Caco-2 (cell line): ENCODE measurements at regions of chr2 and their contacts with region 1.

Region 1: DNA sequence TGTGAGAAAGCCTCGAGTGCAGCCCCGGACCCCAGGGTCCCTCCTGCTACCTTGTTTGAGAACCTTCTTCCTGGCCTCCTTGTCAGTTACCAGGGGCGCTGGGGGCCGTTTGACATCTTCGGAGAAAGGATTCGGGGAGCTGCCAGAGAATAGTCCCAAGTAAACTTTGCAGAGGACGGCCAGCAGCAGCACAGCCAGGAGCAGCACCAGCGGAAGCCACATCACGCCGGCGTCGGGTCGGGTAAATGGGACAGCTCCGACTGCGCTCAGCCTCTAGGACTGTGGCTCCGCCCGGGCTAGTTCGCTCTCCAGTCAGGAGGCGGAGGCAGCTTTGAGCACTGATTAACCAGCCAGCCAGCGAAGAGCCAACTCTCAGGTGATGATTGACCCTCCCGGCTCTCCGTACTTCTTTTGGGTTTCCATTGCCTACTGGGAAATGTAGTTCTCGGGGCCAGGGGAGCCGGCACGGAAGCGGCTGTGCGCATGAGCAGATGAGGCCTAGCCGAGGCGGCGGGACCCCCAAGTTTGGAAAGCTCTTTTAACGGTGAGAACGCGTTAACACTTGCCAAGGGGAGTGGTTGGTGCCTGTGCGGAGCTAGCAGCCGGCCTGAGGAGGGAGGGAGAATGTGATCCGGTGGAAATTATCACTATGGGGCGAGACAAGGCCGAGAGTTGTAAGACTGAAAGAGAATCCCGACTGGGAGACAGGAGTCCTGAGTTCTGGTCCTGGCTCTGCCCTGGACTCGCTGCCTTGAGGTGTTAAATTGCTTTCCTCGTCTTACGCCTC is at the starts of genes ELMOD3 and RETSAT:
- DNase-seq: peak; percentile 99 to 100
- H3K4me3 ChIP-seq: peak within 1 kb of the TSS; percentile 49
- H3K4me3 Mint-ChIP-seq: peak within 1 kb of the TSS; percentile 99
- H3K27ac Mint-ChIP-seq: peak within 1 kb of the TSS; percentile 96
- H3K4me1 ChIP-seq: no peaks in the 10 kb centered on the region
- H3K4me1 Mint-ChIP-seq: no peaks in the 10 kb centered on the region
- H3K27me3 ChIP-seq: no peaks in the 10 kb centered on the region
- H3K27me3 Mint-ChIP-seq: no peaks in the 10 kb centered on the region
- CTCF ChIP-seq: no peak
- total RNA-seq, gene ELMOD3: 10.3 and 11.3 TPM in 2 replicates
- total RNA-seq, gene RETSAT: 31.1 and 32.3 TPM in 2 replicates

Region 2: GRCh38 chr2:85162746-85163301 is 191.7 kb before region 1 on chr2:
- CTCF ChIA-PET with region 1: no interaction called
- POLR2A ChIA-PET with region 1: no interaction called
- intact Hi-C with region 1: no loop called
- DNase-seq: no peak
- H3K4me3 ChIP-seq: no peak overlapping the region
- H3K4me3 Mint-ChIP-seq: no peak overlapping the region
- H3K27ac Mint-ChIP-seq: no peak overlapping the region
- H3K4me1 ChIP-seq: no peaks in the 10 kb centered on the region
- H3K4me1 Mint-ChIP-seq: peaks cover 18% of the 10 kb centered on the region
- H3K27me3 ChIP-seq: no peaks in the 10 kb centered on the region
- H3K27me3 Mint-ChIP-seq: no peaks in the 10 kb centered on the region
- CTCF ChIP-seq: no peak

Region 3: GRCh38 chr2:85302121-85302520 is 52.4 kb before region 1 on chr2:
- CTCF ChIA-PET with region 1: no interaction called
- POLR2A ChIA-PET with region 1: no interaction called
- intact Hi-C with region 1: no loop called
- DNase-seq: no peak
- H3K4me3 ChIP-seq: no peak overlapping the region
- H3K4me3 Mint-ChIP-seq: no peak overlapping the region
- H3K27ac Mint-ChIP-seq: no peak overlapping the region
- H3K4me1 ChIP-seq: peaks cover 6% of the 10 kb centered on the region
- H3K4me1 Mint-ChIP-seq: peaks cover 9% of the 10 kb centered on the region
- H3K27me3 ChIP-seq: no peaks in the 10 kb centered on the region
- H3K27me3 Mint-ChIP-seq: no peaks in the 10 kb centered on the region
- CTCF ChIP-seq: no peak

Region 4: DNA sequence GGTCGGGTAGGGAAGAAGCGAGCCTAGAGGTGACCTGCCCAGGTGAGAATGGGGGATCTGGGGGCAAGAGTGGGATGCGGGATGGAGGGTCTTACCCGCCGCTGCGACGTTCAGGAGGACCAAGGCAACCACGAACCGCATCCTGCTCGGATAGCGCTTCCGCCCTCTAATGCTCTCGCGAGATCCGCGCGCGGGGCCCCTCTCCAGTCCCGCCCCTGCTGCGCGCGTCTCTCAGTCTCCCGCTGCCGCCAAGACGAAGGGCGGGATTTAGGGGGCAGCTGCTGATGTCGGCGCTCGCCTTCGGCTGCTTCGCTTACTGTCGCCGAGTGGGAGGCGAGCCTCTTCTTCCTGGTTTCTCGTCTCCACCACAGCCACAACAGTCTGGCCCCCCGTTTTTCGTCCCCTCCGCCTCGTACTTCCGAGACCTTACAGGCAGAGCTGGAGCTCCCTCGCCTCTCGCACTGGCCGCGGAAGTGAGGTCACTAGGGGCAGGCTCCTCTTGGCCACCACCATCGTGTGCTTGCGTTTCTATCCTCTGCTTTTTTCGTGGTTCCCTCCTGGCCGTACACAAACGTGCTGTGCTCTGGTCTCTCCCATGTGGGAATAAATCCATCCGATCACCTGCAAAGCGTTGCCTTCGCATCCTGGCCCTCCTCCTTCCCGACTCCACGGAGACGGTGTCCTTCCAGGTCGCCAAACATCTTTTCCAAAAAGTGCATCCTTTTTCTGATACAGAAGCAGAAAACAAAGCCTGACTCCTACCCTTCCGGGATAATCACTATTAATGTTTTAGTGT is 26.5 kb before region 1 on chr2 and contains the start of gene TGOLN2:
- CTCF ChIA-PET with region 1: interaction called, 4 read pairs
- POLR2A ChIA-PET with region 1: interaction called, 18 read pairs
- intact Hi-C with region 1: loop called (anchors 1 kb)
- DNase-seq: peak; percentile 91 to 94
- H3K4me3 ChIP-seq: peak within 1 kb of the TSS; percentile 93
- H3K4me3 Mint-ChIP-seq: peak within 1 kb of the TSS; percentile 86
- H3K27ac Mint-ChIP-seq: peak within 1 kb of the TSS; percentile 97
- H3K4me1 ChIP-seq: peaks cover 25% of the 10 kb centered on the region
- H3K4me1 Mint-ChIP-seq: peaks cover 22% of the 10 kb centered on the region
- H3K27me3 ChIP-seq: no peaks in the 10 kb centered on the region
- H3K27me3 Mint-ChIP-seq: no peaks in the 10 kb centered on the region
- CTCF ChIP-seq: peak in 1 of 2 experiments; percentile 14
- total RNA-seq, gene TGOLN2: 109 and 119 TPM in 2 replicates

Region 5: GRCh38 chr2:85369500-85369899 is 15.0 kb after region 1 on chr2:
- CTCF ChIA-PET with region 1: interaction called, 13 read pairs
- POLR2A ChIA-PET with region 1: interaction called, 4 read pairs
- intact Hi-C with region 1: no loop called
- DNase-seq: peak in 1 of 2 experiments; percentile 25
- H3K4me3 ChIP-seq: no peak overlapping the region
- H3K4me3 Mint-ChIP-seq: no peak overlapping the region
- H3K27ac Mint-ChIP-seq: no peak overlapping the region
- H3K4me1 ChIP-seq: no peaks in the 10 kb centered on the region
- H3K4me1 Mint-ChIP-seq: no peaks in the 10 kb centered on the region
- H3K27me3 ChIP-seq: no peaks in the 10 kb centered on the region
- H3K27me3 Mint-ChIP-seq: no peaks in the 10 kb centered on the region
- CTCF ChIP-seq: no peak

Region 6: GRCh38 chr2:85468704-85469349 is 114.3 kb after region 1 on chr2:
- CTCF ChIA-PET with region 1: no interaction called
- POLR2A ChIA-PET with region 1: no interaction called
- intact Hi-C with region 1: no loop called
- DNase-seq: peak; percentile 70 to 86
- H3K4me3 ChIP-seq: no peak overlapping the region
- H3K4me3 Mint-ChIP-seq: peak overlapping the region; percentile 20
- H3K27ac Mint-ChIP-seq: peak overlapping the region; percentile 82
- H3K4me1 ChIP-seq: peaks cover 18% of the 10 kb centered on the region
- H3K4me1 Mint-ChIP-seq: peaks cover 23% of the 10 kb centered on the region
- H3K27me3 ChIP-seq: no peaks in the 10 kb centered on the region
- H3K27me3 Mint-ChIP-seq: no peaks in the 10 kb centered on the region
- CTCF ChIP-seq: no peak

Region 7: DNA sequence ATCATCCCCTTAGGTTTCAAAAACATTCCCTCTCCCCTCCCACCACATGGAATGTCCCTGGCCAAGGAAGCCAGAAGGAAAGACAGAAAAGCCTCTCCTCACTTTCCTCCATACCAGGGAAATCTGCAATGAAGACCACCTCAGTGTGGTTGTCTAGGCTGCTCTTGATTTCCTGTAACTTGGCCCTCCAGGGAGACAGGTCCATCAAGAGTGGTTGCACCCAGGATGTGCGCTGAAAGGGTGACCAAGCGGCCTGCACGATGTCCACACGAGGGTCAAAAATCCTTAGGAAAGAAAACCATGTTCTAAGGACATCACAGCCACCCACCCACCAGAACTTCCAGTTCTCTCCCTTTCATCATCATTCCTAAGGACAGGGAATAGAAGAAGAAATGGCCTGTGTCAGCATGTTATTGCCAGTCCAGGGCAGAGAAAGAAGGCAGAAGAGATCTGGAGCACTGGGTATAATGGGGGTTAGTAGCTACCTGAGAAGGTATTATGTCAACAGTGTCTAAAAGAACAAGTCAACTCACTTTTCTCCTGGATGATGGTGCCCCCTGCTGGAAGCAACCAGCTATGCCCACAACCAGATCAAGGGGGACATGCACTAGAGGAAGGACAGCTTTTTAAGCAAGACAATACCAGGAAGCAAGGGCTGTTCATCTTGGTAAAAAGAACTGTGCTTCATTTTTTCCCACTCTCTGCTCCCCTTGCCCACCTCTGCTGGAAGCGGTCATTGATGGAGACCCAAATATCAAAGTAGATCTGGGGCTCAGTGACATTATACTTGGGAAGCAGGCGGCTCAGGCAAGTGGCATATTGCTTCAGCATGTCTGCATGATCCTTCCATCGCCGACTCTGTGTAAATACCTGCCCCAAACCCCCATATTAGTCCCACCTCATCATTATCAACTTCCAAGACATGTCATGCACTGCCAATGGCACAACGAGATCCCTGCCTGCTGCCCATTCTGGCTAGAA is 197.5 kb after region 1 on chr2:
- CTCF ChIA-PET with region 1: no interaction called
- POLR2A ChIA-PET with region 1: no interaction called
- intact Hi-C with region 1: loop called (anchors 1 kb)
- DNase-seq: peak; percentile 81 to 89
- H3K4me3 ChIP-seq: no peak overlapping the region
- H3K4me3 Mint-ChIP-seq: no peak overlapping the region
- H3K27ac Mint-ChIP-seq: no peak overlapping the region
- H3K4me1 ChIP-seq: no peaks in the 10 kb centered on the region
- H3K4me1 Mint-ChIP-seq: no peaks in the 10 kb centered on the region
- H3K27me3 ChIP-seq: no peaks in the 10 kb centered on the region
- H3K27me3 Mint-ChIP-seq: no peaks in the 10 kb centered on the region
- CTCF ChIP-seq: peak; percentile 93